ENCODE measurements at regions of chr12 and their contacts with region 1.

Region 1: DNA sequence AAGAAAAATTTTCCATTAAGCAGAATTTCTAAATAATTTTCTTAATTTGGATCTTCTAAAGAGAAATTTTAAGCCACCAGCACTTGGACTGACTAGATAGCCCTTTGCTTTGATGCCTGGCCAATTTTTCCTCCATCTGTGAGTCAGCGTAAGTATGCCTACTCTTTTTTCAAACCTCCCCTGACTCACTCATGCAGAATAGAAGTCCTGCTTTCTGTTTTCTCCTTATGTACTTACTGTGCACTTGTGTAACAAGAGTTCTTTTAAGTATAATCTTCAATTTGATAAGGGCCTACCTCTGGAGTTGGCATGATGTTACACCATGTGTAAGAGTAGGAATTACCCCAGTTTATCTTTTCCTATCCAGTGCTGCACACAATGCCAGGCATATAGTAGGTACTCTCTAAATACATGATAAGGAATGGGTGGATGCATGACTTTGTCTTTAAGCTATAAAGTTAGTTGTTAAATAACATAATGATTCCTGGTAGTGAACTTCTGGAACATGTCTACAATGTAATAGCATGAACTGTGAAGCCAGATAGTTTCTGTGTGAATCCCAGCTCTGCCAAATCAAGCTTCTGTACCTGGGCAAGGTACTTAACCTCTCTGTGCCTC is 329.6 kb downstream of the TMTC2 start:
- DNase-seq: peak; percentile 50
- H3K4me3 Mint-ChIP-seq: peak overlapping the region; percentile 23
- H3K27ac Mint-ChIP-seq: peak overlapping the region; percentile 43
- H3K4me1 Mint-ChIP-seq: peaks cover 15% of the 10 kb centered on the region
- H3K27me3 Mint-ChIP-seq: no peaks in the 10 kb centered on the region
- CTCF ChIP-seq: no peak

Region 2: GRCh38 chr12:83389237-83389996 is 373.1 kb after region 1 on chr12:
- CTCF ChIA-PET with region 1: no interaction called
- intact Hi-C with region 1: loop called (anchors 10 kb)
- DNase-seq: peak; percentile 2
- H3K4me3 Mint-ChIP-seq: no peak overlapping the region
- H3K27ac Mint-ChIP-seq: no peak overlapping the region
- H3K4me1 Mint-ChIP-seq: no peaks in the 10 kb centered on the region
- H3K27me3 Mint-ChIP-seq: no peaks in the 10 kb centered on the region
- CTCF ChIP-seq: no peak

Measured in Calu3 (cell line).